Astrocyte of the cerebellum (primary cell): ENCODE measurements at regions of chr1 and their contacts with region 1.

Region 1: DNA sequence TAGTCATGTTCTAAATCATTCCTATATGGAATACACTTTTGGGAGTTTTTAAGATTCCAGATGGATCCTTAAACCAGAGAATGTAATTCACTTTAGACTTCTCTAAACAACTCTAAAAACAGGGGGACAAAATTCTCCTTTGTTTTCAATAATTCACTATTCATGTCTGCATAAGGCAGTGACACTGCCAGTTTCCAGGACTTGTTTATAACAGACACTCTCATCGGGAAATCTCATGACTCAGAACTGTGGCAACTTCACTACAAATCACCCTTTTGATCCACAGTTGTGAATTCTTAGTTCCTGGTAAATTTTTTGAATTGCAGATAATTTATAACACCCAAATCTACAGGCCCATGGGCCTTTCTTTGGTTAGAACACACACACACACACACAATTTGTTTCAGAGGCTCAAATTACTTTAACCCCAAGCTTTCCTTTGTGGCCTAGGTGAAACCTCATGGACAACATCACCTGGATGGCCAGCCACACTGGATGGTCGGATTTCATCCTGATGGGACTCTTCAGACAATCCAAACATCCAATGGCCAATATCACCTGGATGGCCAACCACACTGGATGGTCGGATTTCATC is at the start of gene OR2T4:
- DNase-seq: no peak
- H3K4me3 ChIP-seq: no peak within 1 kb of the TSS
- CTCF ChIP-seq: no peak

Region 2: DNA sequence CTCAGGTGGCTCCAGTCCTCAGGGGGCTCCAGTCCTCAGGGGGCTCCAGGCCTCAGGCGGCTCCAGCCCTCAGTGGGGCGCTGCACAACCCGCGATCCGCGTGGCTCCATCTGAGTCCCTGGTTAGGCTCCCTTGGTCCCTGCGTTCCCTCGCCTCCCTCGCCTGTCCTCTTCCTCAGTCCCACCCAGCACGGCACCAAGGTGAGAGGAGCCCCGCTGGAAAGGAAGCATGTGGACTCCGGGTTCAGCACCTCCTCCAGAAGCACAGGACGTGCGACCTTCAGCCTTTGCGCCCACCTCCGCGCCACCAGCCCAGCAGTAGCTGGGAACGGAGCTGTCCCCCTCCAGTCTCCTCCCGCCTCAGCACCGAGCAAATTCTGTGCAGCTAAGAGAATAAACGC is 224.4 kb before region 1 on chr1:
- in situ Hi-C with region 1: no loop called
- DNase-seq: no peak
- H3K4me3 ChIP-seq: no peak overlapping the region
- CTCF ChIP-seq: no peak

Region 3: GRCh38 chr1:248411810-248412340 is 50.7 kb after region 1 on chr1:
- in situ Hi-C with region 1: loop called (anchors 5 kb)
- DNase-seq: no peak
- H3K4me3 ChIP-seq: no peak overlapping the region
- CTCF ChIP-seq: no peak